Colonic mucosa (tissue), 4 donors: ENCODE measurements at regions of chr5 and their contacts with region 1.

Region 1: GRCh38 chr5:1763548-1763911 is 36.1 kb downstream of the MRPL36 start:
- DNase-seq: no peak
- H3K4me3 ChIP-seq: no peak overlapping the region
- H3K27ac ChIP-seq: no peak overlapping the region
- H3K4me1 ChIP-seq: no peaks in the 10 kb centered on the region
- H3K27me3 ChIP-seq: no peaks in the 10 kb centered on the region
- CTCF ChIP-seq: peak; percentile 39

Region 2: GRCh38 chr5:2017540-2018389 is 254.2 kb after region 1 on chr5:
- intact Hi-C with region 1: loop called (anchors 10 kb)
- DNase-seq: no peak
- H3K4me3 ChIP-seq: no peak overlapping the region
- H3K27ac ChIP-seq: no peak overlapping the region
- H3K4me1 ChIP-seq: no peaks in the 10 kb centered on the region
- H3K27me3 ChIP-seq: no peaks in the 10 kb centered on the region
- CTCF ChIP-seq: no peak

Region 3: DNA sequence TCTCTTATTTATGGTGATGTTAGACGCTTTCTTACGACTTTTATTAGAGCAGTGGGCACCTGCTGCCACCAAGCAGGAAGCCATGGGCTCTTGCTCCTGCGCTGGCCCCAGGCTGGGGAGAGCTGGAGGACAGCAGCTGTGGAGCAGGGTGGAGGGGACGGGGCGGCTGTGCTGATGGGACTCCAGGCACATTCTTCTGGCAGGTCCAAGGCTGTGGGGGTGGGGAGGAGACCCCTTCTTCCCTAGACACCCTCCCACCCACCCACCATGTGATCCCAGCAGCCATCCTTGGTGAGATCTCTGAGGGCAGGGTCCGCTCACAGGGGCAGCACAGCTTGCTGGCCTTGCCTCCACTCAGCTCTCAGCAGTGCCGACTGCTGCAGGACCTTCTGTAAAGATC is 311.8 kb after region 1 on chr5:
- intact Hi-C with region 1: no loop called
- DNase-seq: no peak
- H3K4me3 ChIP-seq: no peak overlapping the region
- H3K27ac ChIP-seq: no peak overlapping the region
- H3K4me1 ChIP-seq: no peaks in the 10 kb centered on the region
- H3K27me3 ChIP-seq: no peaks in the 10 kb centered on the region
- CTCF ChIP-seq: no peak

Region 4: DNA sequence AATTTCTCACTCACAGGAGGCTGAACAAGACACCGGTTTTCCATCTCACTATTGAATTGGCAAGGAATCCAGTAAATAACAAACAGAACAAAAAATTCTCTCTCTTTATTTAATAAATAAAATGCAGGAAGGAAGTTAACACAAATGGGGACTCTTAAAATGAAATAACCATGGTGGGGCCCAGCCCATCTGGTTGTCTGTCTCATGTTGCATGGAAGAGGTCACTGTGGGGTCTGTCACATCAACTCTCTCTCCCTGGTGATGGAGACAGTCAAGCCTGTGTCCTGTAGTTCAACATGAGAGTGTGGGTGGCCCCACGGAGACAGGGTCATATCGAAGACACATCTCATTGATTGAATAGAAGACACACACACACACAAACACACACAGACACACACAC is 690.3 kb after region 1 on chr5:
- intact Hi-C with region 1: no loop called
- DNase-seq: no peak
- H3K4me3 ChIP-seq: no peak overlapping the region
- H3K27ac ChIP-seq: no peak overlapping the region
- H3K4me1 ChIP-seq: no peaks in the 10 kb centered on the region
- H3K27me3 ChIP-seq: no peaks in the 10 kb centered on the region
- CTCF ChIP-seq: no peak